ENCODE measurements at regions of chr1 and their contacts with region 1.

Region 1: DNA sequence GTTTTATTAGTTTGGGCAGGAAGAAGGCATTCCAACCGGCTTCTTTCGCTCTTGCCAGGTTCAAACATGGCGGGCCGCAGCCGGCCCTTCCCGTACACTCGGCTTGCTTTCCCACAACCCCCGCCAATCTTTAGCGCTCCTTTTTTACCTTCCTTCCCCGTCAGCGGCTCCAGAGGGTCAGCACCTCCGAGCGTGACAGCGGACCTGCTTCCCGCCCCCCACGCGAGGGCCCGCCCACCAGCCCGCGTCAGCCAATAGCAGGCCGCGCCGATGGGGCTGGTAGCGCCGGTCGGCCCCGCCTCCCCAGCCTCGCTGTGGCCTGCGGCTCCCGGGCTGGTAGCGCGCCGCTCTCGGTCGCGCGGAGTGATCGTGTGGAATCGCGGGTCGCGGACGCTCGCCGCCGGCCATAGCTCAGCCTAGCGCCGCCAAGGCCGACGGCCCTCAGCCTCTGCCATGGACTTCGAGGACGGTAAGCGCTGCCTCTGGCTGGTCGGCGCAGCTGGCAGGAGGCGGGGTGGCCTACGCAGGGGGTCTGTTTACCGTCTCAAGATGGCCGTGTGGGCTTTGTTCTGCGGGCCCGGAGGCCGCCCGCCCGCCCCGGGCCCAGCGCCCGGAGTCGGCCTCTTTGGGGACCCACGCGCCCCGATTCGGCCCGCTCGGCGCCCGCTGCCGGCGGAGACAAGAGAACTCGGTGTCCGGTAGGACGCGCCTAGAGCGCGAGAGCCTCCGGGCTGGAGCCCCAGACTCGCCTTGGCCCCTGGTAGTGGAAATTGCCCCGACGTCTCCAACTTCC is at the start of gene ZNF326:
- DNase-seq: peak; percentile 97
- ATAC-seq: peak; percentile 98 to 99 (median 98)
- H3K4me3 ChIP-seq: peak within 1 kb of the TSS; percentile 89
- H3K27ac ChIP-seq: peak within 1 kb of the TSS; percentile 95
- H3K4me1 ChIP-seq: peaks cover 31% of the 10 kb centered on the region
- H3K27me3 ChIP-seq: no peaks in the 10 kb centered on the region
- CTCF ChIP-seq: no peak
- total RNA-seq, gene ZNF326: 5.9 to 16.0 (median 10.7) TPM

Region 2: GRCh38 chr1:89022167-89022959 is 972.6 kb before region 1 on chr1 and contains the start of gene GBP3:
- intact Hi-C with region 1: no loop called
- DNase-seq: no peak
- ATAC-seq: peak in 1 of 4 donors; percentile 61
- H3K4me3 ChIP-seq: peak within 1 kb of the TSS; percentile 63
- H3K27ac ChIP-seq: peak within 1 kb of the TSS; percentile 60
- H3K4me1 ChIP-seq: no peaks in the 10 kb centered on the region
- H3K27me3 ChIP-seq: no peaks in the 10 kb centered on the region
- CTCF ChIP-seq: no peak
- total RNA-seq, gene GBP3: 1.4 to 5.3 (median 2.0) TPM

Region 3: DNA sequence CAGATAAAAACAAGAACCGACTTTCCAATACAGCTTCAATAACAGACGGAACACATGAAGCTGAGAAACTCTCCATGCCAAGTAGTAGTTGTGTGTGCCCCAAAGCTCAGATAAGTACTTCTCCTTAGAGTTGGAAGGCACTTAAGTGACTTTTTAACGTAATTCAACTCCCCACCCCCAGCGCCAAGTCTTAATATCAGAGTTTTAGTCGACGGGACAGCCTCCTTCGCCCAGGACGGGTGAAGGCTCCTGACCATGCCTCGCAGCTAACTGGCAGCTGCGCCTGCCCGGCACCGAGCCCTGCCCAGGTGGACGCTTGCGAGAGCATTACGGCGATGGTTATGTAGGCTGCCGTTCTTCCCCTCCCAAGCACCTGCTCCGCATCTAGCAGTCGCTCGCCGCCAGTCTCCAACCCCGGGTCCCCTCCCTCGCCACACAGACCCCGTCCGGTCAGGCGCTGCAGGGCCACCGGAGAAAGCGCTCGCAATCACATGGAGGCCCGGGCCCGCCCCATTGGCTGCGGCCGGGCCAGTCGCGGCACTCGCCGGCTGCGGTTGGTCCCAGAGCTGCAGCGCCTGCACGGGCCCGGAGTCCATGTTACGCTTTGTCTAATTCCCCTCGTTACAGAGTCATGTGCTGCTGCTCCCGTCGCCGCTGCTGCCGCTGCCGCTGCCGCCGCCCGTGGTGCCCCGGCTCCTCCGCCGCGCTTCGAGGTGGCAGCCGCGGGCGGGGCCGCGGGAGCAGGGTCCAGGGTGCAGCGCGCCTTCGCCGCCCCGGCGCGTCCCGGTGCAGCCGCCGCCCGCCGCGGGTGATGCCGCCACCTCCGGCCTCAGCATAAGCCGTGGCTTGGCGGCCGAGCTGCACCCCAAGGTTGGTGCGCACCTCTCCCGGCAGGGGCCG is 174.3 kb before region 1 on chr1 and contains the start of gene LRRC8D:
- intact Hi-C with region 1: loop called in 1 of 2 experiments (anchors 5 kb)
- DNase-seq: peak; percentile 85 to 91
- ATAC-seq: peak; percentile 98 to 99 (median 98)
- H3K4me3 ChIP-seq: peak within 1 kb of the TSS; percentile 98
- H3K27ac ChIP-seq: peak within 1 kb of the TSS; percentile 74
- H3K4me1 ChIP-seq: peaks cover 12% of the 10 kb centered on the region
- H3K27me3 ChIP-seq: no peaks in the 10 kb centered on the region
- CTCF ChIP-seq: no peak
- total RNA-seq, gene LRRC8D: 3.5 to 6.7 (median 5.4) TPM

Region 4: DNA sequence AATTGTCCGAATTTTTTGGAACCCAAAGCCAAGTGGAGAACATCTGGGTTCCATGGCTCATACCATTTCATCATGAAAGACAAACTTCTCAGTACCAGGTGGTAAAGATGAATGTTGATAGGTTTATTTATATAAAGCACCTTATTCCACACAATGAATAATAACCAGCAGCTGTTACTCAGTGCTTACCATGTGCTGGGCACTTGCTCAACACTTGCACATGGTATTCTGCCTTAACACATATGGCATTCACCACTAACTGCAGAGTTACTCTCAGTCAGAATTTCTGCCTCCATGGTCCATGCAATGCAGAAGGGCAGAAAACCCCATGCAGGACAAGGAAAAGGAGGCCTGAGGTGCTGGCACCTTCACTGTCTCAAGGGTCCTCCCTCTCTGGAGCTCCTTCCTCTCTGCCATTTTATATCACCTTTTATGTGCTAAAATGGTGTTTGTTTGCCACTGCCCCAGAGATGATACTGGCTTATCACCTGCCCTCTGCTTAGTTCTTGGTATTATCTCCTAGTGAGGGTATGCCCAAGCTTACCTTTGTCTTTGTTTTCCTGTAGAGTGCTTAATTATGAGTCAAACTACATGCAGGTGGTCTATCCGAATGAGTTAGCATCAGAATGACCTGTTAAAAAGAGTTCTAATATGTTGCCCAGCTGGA is 76.7 kb before region 1 on chr1:
- intact Hi-C with region 1: loop called in 1 of 2 experiments (anchors 5 kb)
- DNase-seq: no peak
- ATAC-seq: peak; percentile 92 to 97 (median 96)
- H3K4me3 ChIP-seq: no peak overlapping the region
- H3K27ac ChIP-seq: peak overlapping the region; percentile 66
- H3K4me1 ChIP-seq: peaks cover 25% of the 10 kb centered on the region
- H3K27me3 ChIP-seq: no peaks in the 10 kb centered on the region
- CTCF ChIP-seq: no peak

Region 5: DNA sequence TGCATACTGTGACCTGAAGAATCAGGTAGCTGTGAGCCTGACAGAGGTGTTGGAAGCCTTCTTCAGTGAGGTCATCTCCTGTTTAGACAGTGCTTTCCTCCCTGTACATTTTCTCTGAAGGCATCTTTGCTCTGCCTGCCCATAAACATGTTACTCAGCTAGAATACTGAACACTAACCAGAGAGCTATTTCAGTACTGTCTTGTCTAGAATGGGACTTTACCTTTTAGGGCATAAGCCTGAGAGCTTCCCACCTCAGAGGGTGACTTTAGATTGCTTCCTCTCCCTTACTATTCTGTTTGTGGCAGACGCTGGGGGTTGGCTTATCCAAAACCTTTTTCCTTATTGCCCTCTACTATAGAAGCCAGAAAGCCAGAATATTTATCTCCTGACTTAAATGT is 23.4 kb before region 1 on chr1:
- intact Hi-C with region 1: no loop called
- DNase-seq: no peak
- ATAC-seq: no peak
- H3K4me3 ChIP-seq: no peak overlapping the region
- H3K27ac ChIP-seq: no peak overlapping the region
- H3K4me1 ChIP-seq: no peaks in the 10 kb centered on the region
- H3K27me3 ChIP-seq: no peaks in the 10 kb centered on the region
- CTCF ChIP-seq: no peak

Measured in psoas muscle (tissue), 8 donors.